ENCODE measurements at regions of chr7 and their contacts with region 1.

Region 1: DNA sequence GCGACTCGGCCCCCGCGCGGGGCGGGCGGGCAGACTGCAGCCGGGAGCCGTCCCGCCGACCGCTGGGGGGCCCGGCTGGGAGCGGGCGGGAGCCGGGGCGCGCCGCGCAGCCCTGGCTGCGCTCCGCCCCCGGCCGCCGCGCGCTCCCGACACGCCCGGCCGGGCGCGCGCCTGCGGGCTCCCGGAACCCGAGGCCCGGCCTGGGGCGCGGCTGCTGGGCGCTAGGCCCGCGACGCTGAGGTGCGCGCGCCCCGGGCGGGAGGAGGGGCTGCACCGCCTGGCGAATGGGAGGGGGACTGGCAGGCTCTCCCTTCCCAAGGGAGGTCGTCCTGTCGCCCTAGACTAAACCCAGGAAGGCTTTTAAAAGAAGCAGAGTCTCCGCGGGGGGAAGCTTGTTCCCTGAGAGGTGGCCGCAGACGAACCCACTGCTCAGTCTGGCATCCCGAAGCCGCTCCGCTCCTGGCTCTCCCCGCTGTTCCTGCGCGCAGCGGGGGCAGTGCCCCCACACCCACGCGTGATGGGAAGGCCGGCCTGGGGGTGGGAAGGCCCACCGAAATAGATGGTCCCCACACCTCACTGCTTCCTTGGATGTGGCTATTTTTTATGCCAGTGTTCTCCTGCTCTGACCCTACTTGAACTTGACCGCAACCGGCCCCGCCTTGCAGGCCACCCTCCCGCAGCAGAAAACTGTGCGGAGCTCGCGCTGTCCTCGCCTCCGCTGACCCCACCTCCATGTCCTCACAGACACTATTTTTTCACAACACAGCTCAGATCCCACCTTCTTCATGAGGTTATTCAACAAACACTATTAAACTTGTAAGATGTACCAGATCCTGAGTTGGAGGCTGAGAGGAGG is at the start of gene VOPP1:
- DNase-seq: peak; percentile 83
- ATAC-seq: peak; percentile 88
- total RNA-seq, gene VOPP1: 23.1 TPM

Region 2: DNA sequence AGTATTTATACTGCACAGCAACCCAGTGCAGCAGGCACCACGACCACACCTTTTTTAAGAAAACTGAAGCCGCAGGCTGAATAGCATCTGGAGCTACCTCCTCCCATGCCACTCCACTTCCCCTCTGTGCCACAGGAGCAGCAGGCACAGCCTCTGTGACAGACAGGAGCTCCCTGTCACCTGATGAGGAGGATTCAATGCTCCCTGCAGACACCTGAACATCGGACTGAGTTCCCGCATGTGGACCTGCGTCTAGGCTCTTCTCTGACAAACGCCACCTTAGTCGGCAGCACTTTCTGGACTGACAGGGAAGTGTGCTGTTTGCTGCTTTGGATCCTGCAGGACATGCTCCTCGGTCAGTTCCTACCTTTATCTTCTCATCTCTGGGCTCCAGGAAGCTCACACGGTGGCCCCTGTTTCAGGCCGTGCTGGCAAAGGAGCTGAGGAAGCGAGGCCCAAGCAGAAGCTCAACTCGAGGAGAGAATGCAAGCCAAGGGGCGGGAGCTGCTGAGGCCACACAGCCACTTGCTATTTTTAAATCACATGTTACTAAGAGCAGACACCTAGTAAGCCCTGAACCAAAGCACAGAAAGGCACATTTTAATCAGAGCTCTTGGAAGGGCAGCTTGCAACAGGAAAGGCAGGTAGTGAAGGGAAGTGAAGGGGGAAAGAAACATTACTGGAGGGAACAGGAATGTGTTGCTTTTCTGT is 56.9 kb before region 1 on chr7:
- intact Hi-C with region 1: loop called (anchors 5 kb)
- DNase-seq: no peak
- ATAC-seq: peak; percentile 78

Region 3: GRCh38 chr7:55550010-55550663 is 22.5 kb before region 1 on chr7:
- intact Hi-C with region 1: loop called (anchors 1 kb)
- DNase-seq: no peak
- ATAC-seq: no peak

Measured in Right ventricle myocardium inferior (tissue), 1 donor.